Endothelial cell of umbilical vein (primary cell): ENCODE measurements at regions of chr13 and their contacts with region 1.

Region 1: GRCh38 chr13:80037505-80037888 is 303.4 kb downstream of the SPRY2 start:
- DNase-seq: peak; percentile 77
- H3K4me3 ChIP-seq: no peak overlapping the region
- H3K27ac ChIP-seq: peak overlapping the region; percentile 77
- H3K4me1 ChIP-seq: peaks cover 36% of the 10 kb centered on the region
- H3K27me3 ChIP-seq: no peaks in the 10 kb centered on the region
- CTCF ChIP-seq: no peak
- POLR2A ChIP-seq: no peak

Region 2: DNA sequence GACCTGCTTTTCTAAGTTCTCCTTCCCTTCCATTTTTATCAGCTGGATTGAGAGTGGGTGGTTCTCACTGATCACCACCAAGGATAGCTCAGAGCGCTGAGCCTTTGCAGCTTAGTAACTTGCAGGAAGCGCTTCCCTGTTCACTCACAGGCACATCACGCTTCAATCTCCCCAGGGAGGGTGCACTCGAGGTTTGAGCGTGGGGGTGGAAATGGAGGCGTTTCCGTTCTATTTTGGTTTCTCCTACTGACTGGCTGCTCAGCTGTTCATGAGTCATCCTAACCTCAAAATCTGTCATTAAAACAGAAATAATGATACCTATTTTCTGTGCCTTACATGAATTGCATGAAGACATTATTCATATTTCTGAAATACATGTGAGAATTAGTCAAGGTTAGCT is 11.3 kb after region 1 on chr13:
- CTCF ChIA-PET with region 1: no interaction called
- POLR2A ChIA-PET with region 1: no interaction called
- dilution Hi-C with region 1: no loop called
- intact Hi-C with region 1: loop called (anchors 1 kb)
- DNase-seq: peak; percentile 91
- H3K4me3 ChIP-seq: no peak overlapping the region
- H3K27ac ChIP-seq: peak overlapping the region; percentile 36
- H3K4me1 ChIP-seq: peaks cover 26% of the 10 kb centered on the region
- H3K27me3 ChIP-seq: no peaks in the 10 kb centered on the region
- CTCF ChIP-seq: no peak
- POLR2A ChIP-seq: no peak

Region 3: GRCh38 chr13:80100636-80101035 is 63.1 kb after region 1 on chr13:
- CTCF ChIA-PET with region 1: no interaction called
- POLR2A ChIA-PET with region 1: no interaction called
- dilution Hi-C with region 1: no loop called
- intact Hi-C with region 1: no loop called
- DNase-seq: no peak
- H3K4me3 ChIP-seq: no peak overlapping the region
- H3K27ac ChIP-seq: no peak overlapping the region
- H3K4me1 ChIP-seq: no peaks in the 10 kb centered on the region
- H3K27me3 ChIP-seq: no peaks in the 10 kb centered on the region
- CTCF ChIP-seq: no peak
- POLR2A ChIP-seq: no peak

Region 4: GRCh38 chr13:80132741-80133601 is 95.5 kb after region 1 on chr13:
- CTCF ChIA-PET with region 1: no interaction called
- POLR2A ChIA-PET with region 1: no interaction called
- dilution Hi-C with region 1: no loop called
- intact Hi-C with region 1: loop called (anchors 5 kb)
- DNase-seq: peak; percentile 84
- H3K4me3 ChIP-seq: peak overlapping the region in 1 of 3 experiments; percentile 21
- H3K27ac ChIP-seq: peak overlapping the region; percentile 32
- H3K4me1 ChIP-seq: peaks cover 23% of the 10 kb centered on the region
- H3K27me3 ChIP-seq: no peaks in the 10 kb centered on the region
- CTCF ChIP-seq: no peak
- POLR2A ChIP-seq: no peak

Region 5: DNA sequence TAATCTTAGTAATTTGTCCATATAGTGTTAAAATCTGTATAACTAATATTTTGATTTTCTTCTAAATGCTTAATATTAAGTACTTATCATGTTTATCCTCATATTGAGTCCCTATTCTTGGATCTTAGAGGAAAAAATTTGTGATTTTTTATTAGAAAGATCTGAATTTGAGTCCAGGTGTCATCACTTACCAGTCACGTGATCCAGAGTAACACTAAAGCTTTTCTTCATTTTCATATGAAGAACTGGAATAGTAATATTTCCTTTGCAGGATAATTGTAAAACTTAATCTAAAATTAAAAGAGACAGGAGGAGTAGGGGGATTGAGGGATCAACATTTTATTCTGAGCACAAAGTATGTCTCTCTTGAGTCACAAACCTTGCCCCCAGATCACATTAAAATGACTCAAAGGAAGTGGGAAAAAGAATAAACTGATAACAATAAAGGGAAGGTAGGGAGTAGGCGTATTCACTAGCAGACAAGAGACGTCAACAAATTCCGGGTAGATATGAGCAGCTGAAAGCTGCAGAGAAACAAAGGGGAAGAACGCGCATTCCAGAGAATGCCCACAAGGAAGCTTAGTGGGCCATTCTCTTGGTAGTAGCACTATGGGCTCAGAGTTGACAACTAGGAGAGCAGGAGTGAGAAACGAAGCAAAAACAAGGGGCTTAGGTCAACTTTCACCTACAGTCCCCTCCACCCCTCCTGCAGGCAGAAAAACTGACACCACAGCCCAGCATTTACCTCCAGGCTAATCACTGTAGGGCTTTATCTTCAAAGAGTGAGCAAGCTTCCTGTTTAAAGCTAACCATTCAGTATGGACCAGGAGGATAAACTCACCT is 180.3 kb after region 1 on chr13:
- CTCF ChIA-PET with region 1: interaction called, 3 read pairs
- POLR2A ChIA-PET with region 1: no interaction called
- dilution Hi-C with region 1: no loop called
- intact Hi-C with region 1: loop called (anchors 2 kb)
- DNase-seq: peak; percentile 82
- H3K4me3 ChIP-seq: no peak overlapping the region
- H3K27ac ChIP-seq: peak overlapping the region; percentile 85
- H3K4me1 ChIP-seq: peaks cover 15% of the 10 kb centered on the region
- H3K27me3 ChIP-seq: no peaks in the 10 kb centered on the region
- CTCF ChIP-seq: no peak
- POLR2A ChIP-seq: no peak

Region 6: DNA sequence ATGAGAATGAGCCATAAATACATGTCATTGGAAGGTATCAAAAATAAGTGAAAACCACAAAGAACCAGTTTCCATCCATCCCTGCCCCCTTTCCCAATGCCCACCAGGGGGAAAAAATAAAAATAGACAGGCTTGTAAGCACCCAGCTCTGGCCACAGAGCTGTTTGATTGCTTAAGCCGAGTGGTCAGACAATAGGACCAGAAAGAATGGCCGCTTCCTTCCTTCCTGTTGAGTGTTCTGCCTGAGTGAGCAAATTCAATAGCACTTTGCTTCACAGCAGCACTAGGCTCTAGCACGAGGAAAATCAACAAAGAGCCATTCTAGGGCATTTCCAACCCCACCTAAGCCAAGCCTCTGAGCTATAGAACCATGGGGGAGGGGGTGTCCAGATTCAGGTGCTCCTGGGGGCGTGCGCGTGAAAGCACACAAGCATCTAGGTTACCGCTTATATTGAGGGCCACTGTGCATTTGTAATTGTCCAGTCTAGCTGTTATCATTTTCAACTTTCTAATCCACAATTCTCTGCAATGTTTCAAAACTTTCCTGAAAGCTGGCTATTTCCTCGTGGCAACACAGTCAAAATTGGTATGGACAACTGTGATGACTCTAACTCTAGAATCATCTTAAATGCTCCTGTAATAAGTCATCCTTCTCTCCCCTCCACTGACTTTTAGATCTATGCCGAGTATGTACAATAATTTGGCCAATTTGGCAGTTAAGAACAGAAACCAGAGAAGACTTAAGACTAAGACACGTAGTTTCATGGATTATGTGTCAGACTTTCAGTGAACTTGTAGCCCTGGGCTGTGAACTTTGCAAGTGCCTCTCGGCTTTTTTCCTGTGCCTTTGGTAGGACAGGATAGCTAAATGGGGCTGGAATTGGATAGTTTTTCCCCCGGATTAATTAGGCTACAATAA is 239.1 kb after region 1 on chr13:
- CTCF ChIA-PET with region 1: no interaction called
- POLR2A ChIA-PET with region 1: no interaction called
- dilution Hi-C with region 1: no loop called
- intact Hi-C with region 1: loop called (anchors 5 kb)
- DNase-seq: peak; percentile 79
- H3K4me3 ChIP-seq: no peak overlapping the region
- H3K27ac ChIP-seq: peak overlapping the region; percentile 48
- H3K4me1 ChIP-seq: peaks cover 12% of the 10 kb centered on the region
- H3K27me3 ChIP-seq: no peaks in the 10 kb centered on the region
- CTCF ChIP-seq: peak in 1 of 2 donors; percentile 14
- POLR2A ChIP-seq: no peak